Gastrocnemius medialis (tissue), 4 donors: ENCODE measurements at regions of chr14 and their contacts with region 1.

Region 1: DNA sequence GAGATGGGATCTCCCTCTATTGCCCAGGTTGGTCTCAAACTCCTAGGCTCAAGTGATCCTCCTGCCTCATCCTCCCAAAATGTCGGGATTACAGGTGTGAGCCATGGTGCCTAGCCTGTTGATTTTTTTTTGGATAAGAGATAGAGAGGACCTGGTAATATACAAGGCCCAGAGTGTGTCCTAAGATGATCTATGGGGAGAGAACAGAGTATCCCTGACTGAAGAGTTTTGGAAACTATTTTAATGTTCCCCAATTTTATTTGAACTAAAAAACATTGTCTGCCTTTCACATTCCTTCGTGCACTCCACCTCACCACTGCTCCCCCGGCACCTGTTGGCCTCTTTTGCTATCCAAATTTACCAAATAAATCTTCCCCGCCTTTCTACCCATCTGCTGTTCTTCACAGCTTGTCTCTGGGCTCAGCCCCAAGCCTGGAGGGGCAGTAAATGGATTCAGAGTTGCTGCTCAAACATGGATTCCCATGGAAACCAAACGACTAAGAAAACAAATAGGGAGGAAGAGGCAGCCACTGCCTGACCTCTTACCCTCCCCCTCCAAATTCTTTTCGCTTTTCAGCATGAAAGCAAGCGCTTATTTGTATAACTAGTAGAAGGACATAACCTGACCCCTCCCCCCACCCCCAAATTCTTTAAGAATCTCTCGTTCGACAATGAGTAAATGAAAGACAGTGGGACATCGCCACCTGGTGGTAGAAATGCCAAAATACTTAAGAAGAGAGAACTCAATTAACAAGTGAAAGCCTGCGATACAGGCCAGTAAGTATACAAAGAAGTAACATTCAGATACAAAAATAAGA is 22.6 kb downstream of the OR10G3 start:
- DNase-seq: peak; percentile 43 to 44
- ATAC-seq: peak; percentile 71 to 87
- H3K4me3 ChIP-seq: peak overlapping the region; percentile 17 to 48 (median 42)
- H3K27ac ChIP-seq: peak overlapping the region; percentile 6 to 24 (median 22)
- H3K4me1 ChIP-seq: no peaks in the 10 kb centered on the region
- H3K27me3 ChIP-seq: no peaks in the 10 kb centered on the region
- CTCF ChIP-seq: peak; percentile 61 to 76 (median 68)
- POLR2A ChIP-seq: no peak

Region 2: GRCh38 chr14:21437063-21437901 is 120.0 kb before region 1 on chr14:
- in situ Hi-C with region 1: no loop called
- intact Hi-C with region 1: loop called (anchors 5 kb)
- DNase-seq: peak; percentile 97 to 99
- ATAC-seq: peak; percentile 99 to 100
- H3K4me3 ChIP-seq: peak overlapping the region; percentile 76 to 99 (median 92)
- H3K27ac ChIP-seq: peak overlapping the region; percentile 81 to 88 (median 86)
- H3K4me1 ChIP-seq: peaks cover 23 to 25% of the 10 kb centered on the region in 2 donors
- H3K27me3 ChIP-seq: no peaks in the 10 kb centered on the region
- CTCF ChIP-seq: no peak
- POLR2A ChIP-seq: peak; percentile 30 to 41

Region 3: GRCh38 chr14:21498553-21499526 is 58.5 kb before region 1 on chr14:
- in situ Hi-C with region 1: loop called in 1 of 4 experiments (anchors 5 kb)
- intact Hi-C with region 1: loop called (anchors 2 kb)
- DNase-seq: no peak
- ATAC-seq: no peak
- H3K4me3 ChIP-seq: no peak overlapping the region
- H3K27ac ChIP-seq: peak overlapping the region in 1 of 4 donors; percentile 21
- H3K4me1 ChIP-seq: no peaks in the 10 kb centered on the region
- H3K27me3 ChIP-seq: no peaks in the 10 kb centered on the region
- CTCF ChIP-seq: peak; percentile 12 to 41 (median 27)
- POLR2A ChIP-seq: no peak

Region 4: DNA sequence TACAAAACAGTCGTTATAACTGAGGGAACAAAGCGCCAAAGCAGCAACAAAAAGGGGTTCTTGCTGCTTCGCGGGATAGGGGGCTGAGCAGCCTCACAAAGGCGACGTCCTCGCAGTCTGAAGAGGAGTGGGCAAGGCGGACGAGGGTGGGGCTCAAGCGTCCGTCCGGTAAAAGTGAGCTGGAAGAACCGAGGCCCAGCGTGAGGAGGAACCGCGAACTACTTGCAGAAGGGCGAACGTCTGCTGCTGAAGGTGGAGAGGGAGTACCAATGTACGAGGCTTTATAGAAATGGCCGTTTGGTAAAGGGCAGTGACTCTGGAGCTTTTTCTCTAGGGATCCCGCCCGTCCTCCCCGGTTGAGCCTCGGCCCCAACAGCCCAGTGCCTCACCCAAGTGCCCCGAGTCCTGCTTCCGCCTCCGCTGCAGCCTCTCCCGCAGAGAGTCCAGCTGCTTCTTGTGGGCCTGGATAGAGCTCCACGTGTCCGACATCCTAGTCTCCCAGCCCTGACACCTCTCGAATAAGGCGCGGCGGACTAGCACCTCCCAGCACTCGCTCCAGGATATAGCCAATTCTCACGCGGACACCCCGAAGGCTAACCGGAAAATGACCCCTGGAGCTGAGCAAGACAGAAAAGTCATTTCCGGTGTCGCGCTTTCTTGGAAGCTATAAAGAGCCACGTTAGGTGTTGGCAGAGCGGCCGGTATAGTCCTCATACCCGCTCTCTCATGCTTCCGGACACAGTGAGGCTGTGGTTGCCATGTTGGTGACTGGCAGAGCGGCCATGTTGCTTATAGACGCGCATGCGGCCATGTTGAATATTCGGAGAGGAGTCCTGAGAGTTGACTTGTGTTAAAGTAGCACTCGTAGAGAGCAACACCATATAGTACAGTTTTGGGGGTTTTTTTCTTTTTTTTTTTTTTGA is 46.3 kb before region 1 on chr14 and contains the start of gene METTL3:
- in situ Hi-C with region 1: no loop called
- intact Hi-C with region 1: loop called (anchors 5 kb)
- DNase-seq: peak; percentile 98 to 99
- ATAC-seq: peak; percentile 99 to 100
- H3K4me3 ChIP-seq: peak within 1 kb of the TSS; percentile 73 to 96 (median 87)
- H3K27ac ChIP-seq: peak within 1 kb of the TSS; percentile 89 to 96 (median 91)
- H3K4me1 ChIP-seq: peaks cover 16 to 17% of the 10 kb centered on the region in 2 donors
- H3K27me3 ChIP-seq: no peaks in the 10 kb centered on the region
- CTCF ChIP-seq: no peak
- POLR2A ChIP-seq: peak; percentile 52 to 63
- total RNA-seq, gene METTL3: 16.5 to 52.4 (median 34.6) TPM